Right ventricle myocardium inferior (tissue), 1 donor: ENCODE measurements at regions of chr9 and their contacts with region 1.

Region 1: GRCh38 chr9:99134893-99135341 is 30.0 kb downstream of the TGFBR1 start:
- DNase-seq: no peak
- ATAC-seq: no peak

Region 2: GRCh38 chr9:98998441-98999151 is 136.3 kb before region 1 on chr9:
- intact Hi-C with region 1: loop called (anchors 5 kb)
- DNase-seq: peak; percentile 90
- ATAC-seq: peak; percentile 85

Region 3: DNA sequence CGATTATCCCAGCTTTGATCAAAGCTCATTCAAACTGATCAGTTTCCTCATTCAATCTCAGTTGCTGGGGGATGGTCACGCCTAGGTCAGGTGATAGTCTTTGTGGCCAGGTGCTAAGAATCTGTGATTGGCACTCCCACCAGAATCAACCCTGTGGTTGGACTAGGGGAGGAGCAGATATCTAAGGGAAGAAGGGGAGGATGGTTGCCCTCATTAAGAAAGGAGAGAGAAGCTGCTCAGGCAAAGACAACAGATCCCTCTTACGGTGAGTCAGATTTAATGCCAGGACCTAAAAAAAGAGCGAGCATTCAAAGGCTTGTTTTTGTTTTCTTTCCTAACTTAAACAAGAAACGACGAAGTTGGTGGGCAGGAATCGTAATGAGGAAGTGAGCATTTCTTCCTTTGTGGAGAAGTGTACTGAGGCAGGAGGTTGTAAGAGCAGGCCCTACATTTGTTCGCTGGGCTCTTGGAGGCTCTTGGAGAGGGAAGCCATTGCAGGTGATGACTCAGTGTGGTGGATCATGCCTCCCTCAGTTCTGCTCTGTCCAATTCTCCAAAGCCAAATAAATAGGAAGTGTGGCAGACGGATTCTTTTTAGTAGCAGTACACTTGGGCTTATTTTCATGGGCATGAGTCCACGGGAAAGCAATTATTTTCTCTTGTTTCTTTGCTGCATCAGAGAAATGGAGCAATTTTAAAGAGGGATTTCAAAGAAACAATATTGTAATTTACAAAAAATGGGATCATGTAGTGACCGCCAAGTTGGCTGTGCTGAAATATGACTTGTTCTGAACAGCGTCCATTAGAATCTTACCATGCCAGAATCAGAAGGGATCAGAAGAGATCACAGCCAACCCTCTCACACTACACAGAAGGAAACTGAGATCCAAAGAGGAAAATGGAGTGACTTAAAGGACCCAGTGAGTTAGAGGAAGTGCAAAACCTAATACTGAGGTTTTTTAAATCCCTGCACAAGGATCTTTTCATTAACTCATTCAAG is 48.7 kb before region 1 on chr9:
- intact Hi-C with region 1: no loop called
- DNase-seq: no peak
- ATAC-seq: peak; percentile 69

Region 4: DNA sequence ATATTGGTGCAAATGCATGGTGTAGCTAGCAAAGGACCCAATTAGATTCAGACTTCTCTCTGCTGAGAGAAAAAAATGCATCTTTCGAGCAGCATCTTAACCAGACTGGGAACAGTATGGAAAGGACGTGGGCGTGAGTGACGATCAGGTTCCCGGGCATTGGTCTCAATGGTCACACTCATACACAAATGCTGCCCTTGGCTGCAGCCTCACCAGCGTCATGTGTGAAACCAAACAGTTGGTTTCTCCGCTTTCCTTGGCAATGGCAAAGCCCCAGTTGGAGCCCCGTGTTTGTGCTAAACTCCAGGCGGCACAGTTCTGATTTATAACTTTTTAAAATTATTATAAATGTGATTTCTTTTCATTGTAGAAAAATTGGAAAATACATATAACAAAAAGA is 325.0 kb after region 1 on chr9:
- intact Hi-C with region 1: no loop called
- DNase-seq: no peak
- ATAC-seq: no peak